HepG2 (cell line): ENCODE measurements at regions of chr11 and their contacts with region 1.

Region 1: DNA sequence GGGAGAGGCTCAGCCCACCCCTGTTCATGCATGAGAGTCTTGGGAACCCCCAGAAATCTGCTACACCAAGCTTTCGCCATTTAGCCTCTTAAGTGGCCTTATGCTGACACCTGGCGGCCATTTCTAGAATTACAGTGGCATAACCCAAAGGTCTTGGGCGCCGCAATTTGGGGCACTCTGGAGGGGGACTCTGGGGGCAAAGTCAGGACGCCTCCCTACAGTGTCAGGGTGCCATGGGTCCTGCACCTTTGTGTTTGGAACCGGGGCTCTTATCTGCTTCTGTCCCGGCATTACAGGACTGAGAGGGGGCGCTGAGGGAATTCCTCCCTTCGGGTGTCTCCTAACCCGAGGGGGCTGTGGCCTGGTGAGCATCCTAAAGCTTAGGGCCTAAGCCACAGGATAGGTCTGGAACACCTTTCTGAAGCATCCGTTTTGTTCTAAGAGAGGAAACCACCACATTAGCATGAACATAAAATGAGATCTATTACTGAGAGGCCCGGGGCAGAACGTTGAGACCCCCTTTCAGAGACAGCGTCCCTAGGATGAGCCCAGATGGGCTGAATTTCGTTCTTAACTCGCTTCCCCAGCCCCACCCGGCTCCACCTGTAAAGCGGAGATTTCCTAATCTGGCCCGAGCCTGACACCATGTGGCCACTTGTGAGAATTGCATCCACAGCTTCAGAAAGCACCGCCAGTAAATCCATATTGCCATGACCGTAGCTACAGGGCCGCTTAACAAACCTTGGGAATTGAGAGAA is 9.3 kb downstream of the INS start:
- DNase-seq: peak; percentile 73
- ATAC-seq: peak; percentile 39
- H3K4me3 ChIP-seq: peak overlapping the region in 1 of 3 experiments; percentile 31; a peak in 1 of 6 replicates
- H3K27ac ChIP-seq: no peak overlapping the region
- H3K4me1 ChIP-seq: peaks cover 20% of the 10 kb centered on the region
- H3K27me3 ChIP-seq: peaks cover 20 to 44% of the 10 kb centered on the region in 2 experiments
- CTCF ChIP-seq: peak; percentile 86
- EP300 ChIP-seq: no peak
- POLR2A ChIP-seq: no peak
- RAD21 ChIP-seq: peak; percentile 83

Region 2: GRCh38 chr11:1652771-1653540 is 498.7 kb before region 1 on chr11:
- CTCF ChIA-PET with region 1: interaction called, 27 read pairs
- POLR2A ChIA-PET with region 1: interaction called, 10 read pairs
- in situ Hi-C with region 1: loop called (anchors 5 kb)
- intact Hi-C with region 1: loop called (anchors 5 kb)
- DNase-seq: peak; percentile 35
- ATAC-seq: peak; percentile 85
- H3K4me3 ChIP-seq: no peak overlapping the region; a peak in 1 of 6 replicates
- H3K27ac ChIP-seq: peak overlapping the region; percentile 44
- H3K4me1 ChIP-seq: peaks cover 73% of the 10 kb centered on the region
- H3K27me3 ChIP-seq: peaks cover 0 to 7% of the 10 kb centered on the region in 2 experiments; a peak in 2 of 5 replicates
- CTCF ChIP-seq: peak; percentile 96
- EP300 ChIP-seq: no peak
- POLR2A ChIP-seq: no peak
- RAD21 ChIP-seq: peak; percentile 97

Region 3: DNA sequence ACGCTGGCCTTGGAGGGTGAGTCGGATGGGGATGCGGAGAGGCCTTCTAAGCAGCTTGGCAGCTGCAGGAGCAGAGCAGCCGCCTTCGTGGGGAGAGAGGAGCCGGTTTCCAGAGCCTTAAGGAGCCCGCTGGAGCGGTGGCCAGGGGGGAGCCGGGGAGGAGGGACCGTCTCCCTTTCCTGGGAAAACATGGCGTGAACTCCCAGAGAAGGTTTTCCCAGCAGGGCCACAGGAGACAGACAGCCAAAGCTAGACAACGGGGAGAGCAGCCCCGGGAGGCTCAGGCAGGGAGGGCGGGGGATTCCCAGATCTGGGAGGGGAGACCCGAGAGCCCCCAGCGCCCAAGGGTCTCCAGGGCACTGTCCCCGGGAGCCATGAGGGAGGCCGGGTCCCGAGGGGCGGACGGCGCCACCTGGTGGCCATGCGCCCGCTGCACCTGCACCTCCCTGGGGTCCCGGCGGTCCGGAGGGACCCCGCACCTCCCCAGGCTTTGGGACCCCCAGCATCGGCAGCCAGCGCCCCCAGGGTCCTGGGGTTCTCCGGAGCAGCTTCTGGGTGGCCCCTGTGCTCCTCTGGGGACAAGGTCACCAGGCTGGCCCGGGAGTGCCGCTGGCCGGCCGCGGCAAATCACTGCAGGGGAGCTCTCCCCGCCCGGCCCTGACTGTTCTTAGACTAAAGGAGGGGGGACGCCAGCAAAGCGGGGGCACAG is 319.3 kb before region 1 on chr11:
- CTCF ChIA-PET with region 1: interaction called, 60 read pairs
- POLR2A ChIA-PET with region 1: no interaction called
- in situ Hi-C with region 1: no loop called
- intact Hi-C with region 1: loop called (anchors 1 kb)
- DNase-seq: no peak
- ATAC-seq: peak; percentile 41
- H3K4me3 ChIP-seq: peak overlapping the region in 1 of 3 experiments; percentile 49; a peak in 1 of 6 replicates
- H3K27ac ChIP-seq: no peak overlapping the region
- H3K4me1 ChIP-seq: peaks cover 80% of the 10 kb centered on the region
- H3K27me3 ChIP-seq: peaks cover 0 to 6% of the 10 kb centered on the region in 2 experiments; a peak in 2 of 5 replicates
- CTCF ChIP-seq: peak; percentile 95
- EP300 ChIP-seq: no peak
- POLR2A ChIP-seq: no peak
- RAD21 ChIP-seq: peak; percentile 85

Region 4: GRCh38 chr11:1882519-1883238 is 269.0 kb before region 1 on chr11:
- CTCF ChIA-PET with region 1: interaction called, 108 read pairs
- POLR2A ChIA-PET with region 1: interaction called, 21 read pairs
- in situ Hi-C with region 1: loop called (anchors 5 kb)
- intact Hi-C with region 1: loop called (anchors 1 kb)
- DNase-seq: peak; percentile 49
- ATAC-seq: peak; percentile 91
- H3K4me3 ChIP-seq: no peak overlapping the region
- H3K27ac ChIP-seq: no peak overlapping the region
- H3K4me1 ChIP-seq: peaks cover 17% of the 10 kb centered on the region
- H3K27me3 ChIP-seq: peaks cover 8 to 59% of the 10 kb centered on the region in 2 experiments
- CTCF ChIP-seq: peak; percentile 97
- EP300 ChIP-seq: no peak
- POLR2A ChIP-seq: no peak
- RAD21 ChIP-seq: peak; percentile 93

Region 5: GRCh38 chr11:1970956-1971355 is 180.7 kb before region 1 on chr11:
- CTCF ChIA-PET with region 1: interaction called, 24 read pairs
- POLR2A ChIA-PET with region 1: no interaction called
- in situ Hi-C with region 1: no loop called
- intact Hi-C with region 1: no loop called
- DNase-seq: no peak
- ATAC-seq: peak; percentile 14
- H3K4me3 ChIP-seq: no peak overlapping the region
- H3K27ac ChIP-seq: no peak overlapping the region
- H3K4me1 ChIP-seq: no peaks in the 10 kb centered on the region
- H3K27me3 ChIP-seq: no peaks in the 10 kb centered on the region
- CTCF ChIP-seq: no peak
- EP300 ChIP-seq: no peak
- POLR2A ChIP-seq: no peak
- RAD21 ChIP-seq: no peak